ENCODE measurements at regions of chr10 and their contacts with region 1.

Region 1: GRCh38 chr10:103396064-103396788 is at the starts of genes ATP5MK and PDCD11:
- DNase-seq: peak; percentile 75 to 93 (median 91)
- ATAC-seq: peak; percentile 100
- H3K4me3 ChIP-seq: peak within 1 kb of the TSS; percentile 91
- H3K4me3 Mint-ChIP-seq: peak within 1 kb of the TSS; percentile 91 to 99 (median 99)
- H3K27ac ChIP-seq: peak within 1 kb of the TSS; percentile 87
- H3K27ac Mint-ChIP-seq: peak within 1 kb of the TSS; percentile 89 to 97 (median 96)
- H3K4me1 ChIP-seq: peaks cover 25 to 33% of the 10 kb centered on the region in 2 donors
- H3K4me1 Mint-ChIP-seq: peaks cover 42 to 68% (median 62%) of the 10 kb centered on the region in 7 donors
- H3K27me3 ChIP-seq: no peaks in the 10 kb centered on the region
- H3K27me3 Mint-ChIP-seq: no peaks in the 10 kb centered on the region
- total RNA-seq, gene ATP5MK: 106 to 334 (median 120) TPM
- total RNA-seq, gene PDCD11: 28.8 to 56.3 (median 38.8) TPM

Region 2: DNA sequence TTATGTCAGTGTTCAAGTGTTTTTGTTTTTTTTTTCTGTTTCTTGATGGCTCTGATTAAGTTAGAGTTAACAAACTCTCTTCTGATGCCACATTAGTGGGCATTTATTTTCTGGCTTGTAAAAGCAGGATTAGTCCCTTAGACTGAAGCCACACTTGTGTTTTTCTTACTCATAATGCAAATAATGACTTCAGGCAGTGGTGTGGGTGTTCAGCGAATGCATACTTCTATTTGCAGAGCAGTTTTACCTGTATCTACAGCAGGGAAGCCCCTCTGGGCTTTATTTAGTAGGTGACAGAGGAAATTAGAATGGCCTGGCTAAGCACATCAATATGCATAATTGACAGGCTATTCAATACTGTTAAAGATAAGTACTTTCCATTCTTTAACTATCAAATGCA is 398.2 kb before region 1 on chr10:
- CTCF ChIA-PET with region 1: no interaction called
- POLR2A ChIA-PET with region 1: no interaction called
- intact Hi-C with region 1: no loop called
- DNase-seq: no peak
- ATAC-seq: no peak
- H3K4me3 ChIP-seq: no peak overlapping the region
- H3K4me3 Mint-ChIP-seq: no peak overlapping the region
- H3K27ac ChIP-seq: no peak overlapping the region
- H3K27ac Mint-ChIP-seq: peak overlapping the region in 1 of 9 donors; percentile 11
- H3K4me1 ChIP-seq: peaks cover 6 to 9% of the 10 kb centered on the region in 2 donors
- H3K4me1 Mint-ChIP-seq: peaks cover 7 to 31% (median 24%) of the 10 kb centered on the region in 7 donors
- H3K27me3 ChIP-seq: no peaks in the 10 kb centered on the region
- H3K27me3 Mint-ChIP-seq: no peaks in the 10 kb centered on the region

Region 3: DNA sequence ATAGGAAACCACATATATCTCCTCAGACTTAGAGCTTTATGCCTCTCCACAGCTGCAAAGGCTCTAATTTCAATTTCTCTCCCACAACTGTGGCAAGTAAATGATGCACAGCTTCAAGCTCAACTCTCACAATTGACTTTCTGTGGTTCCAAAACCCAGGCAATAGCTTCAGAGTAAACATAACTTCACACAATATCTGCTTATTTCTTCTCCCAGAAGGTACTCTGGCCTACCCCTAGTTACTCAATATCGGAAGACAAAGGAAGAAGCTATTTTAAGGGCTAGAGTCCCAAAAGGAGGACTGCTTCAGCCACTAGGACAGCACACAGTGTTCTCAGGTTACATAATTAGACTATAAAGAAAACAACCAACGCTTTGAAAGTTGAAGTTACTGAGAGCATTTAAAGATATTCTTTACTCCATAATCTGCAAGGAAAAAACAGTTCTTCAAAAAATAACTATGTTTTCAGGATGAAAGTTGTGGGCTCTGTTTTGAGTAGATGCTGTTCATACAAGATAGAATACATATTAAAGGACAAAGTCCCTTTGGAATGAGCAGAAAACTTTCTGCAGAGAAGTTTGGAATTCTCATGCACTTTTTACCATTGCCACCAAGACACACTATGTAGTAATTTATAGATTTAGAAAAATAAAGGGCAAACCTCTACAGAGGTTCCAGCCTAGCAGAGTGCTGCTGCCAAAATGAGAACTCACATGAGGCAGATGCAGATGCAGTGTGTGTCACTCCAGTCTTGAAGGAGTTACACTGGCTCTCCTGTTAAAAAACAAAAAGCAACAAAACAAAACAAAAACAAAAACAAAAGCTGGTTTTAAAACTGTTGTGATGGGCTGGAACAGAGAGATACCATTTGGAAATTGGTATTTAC is 285.0 kb before region 1 on chr10:
- CTCF ChIA-PET with region 1: no interaction called
- POLR2A ChIA-PET with region 1: no interaction called
- intact Hi-C with region 1: no loop called
- DNase-seq: no peak
- ATAC-seq: no peak
- H3K4me3 ChIP-seq: no peak overlapping the region
- H3K4me3 Mint-ChIP-seq: no peak overlapping the region
- H3K27ac ChIP-seq: no peak overlapping the region
- H3K27ac Mint-ChIP-seq: peak overlapping the region in 3 of 9 donors; percentile 10 to 61 (median 60)
- H3K4me1 ChIP-seq: no peaks in the 10 kb centered on the region
- H3K4me1 Mint-ChIP-seq: peaks cover 0 to 12% (median 8%) of the 10 kb centered on the region in 7 donors
- H3K27me3 ChIP-seq: no peaks in the 10 kb centered on the region
- H3K27me3 Mint-ChIP-seq: no peaks in the 10 kb centered on the region

Region 4: DNA sequence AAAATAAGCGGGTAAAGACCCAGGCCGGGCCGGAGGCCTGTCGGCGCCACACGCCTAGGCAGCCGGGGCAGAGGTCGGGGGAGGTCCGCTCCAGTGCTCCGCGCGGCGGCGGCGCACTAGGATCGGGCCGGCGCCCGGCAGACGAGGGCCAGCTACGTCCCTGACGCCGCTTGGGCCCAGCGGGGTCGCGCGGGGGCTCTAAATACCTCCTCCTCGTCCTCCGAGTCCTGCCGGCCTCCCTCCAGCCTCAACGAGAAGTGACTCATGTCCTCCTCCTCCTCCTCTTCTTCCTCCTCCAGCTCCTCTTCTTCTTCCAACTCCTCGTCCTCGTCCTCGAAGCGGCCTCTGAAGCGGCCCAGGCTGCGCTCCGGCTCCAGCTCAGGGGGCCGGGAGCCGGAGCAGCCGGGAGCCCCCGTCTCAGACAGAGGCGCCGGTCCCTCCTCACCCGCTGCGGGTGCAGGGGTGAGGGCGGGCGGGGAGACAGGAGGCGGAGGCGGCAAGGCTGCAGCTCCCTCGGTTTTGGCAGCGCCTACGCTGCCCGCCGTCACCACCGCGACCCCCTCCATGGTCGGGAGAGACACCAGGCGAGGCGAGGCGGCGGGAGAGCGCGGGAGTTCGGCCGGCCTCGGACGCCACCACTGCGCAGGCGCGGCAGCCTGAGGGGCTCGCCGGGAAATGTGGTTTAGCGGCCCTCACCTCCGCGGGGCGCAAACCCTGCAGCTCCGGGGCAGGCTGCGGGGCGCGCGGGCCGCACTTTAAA is 45.5 kb before region 1 on chr10 and contains the start of gene PCGF6:
- CTCF ChIA-PET with region 1: no interaction called
- POLR2A ChIA-PET with region 1: interaction called, 3 read pairs
- intact Hi-C with region 1: loop called (anchors 1 kb)
- DNase-seq: peak; percentile 42 to 85 (median 70)
- ATAC-seq: peak; percentile 88
- H3K4me3 ChIP-seq: peak within 1 kb of the TSS; percentile 79
- H3K4me3 Mint-ChIP-seq: peak within 1 kb of the TSS; percentile 83 to 95 (median 91)
- H3K27ac ChIP-seq: peak within 1 kb of the TSS; percentile 80
- H3K27ac Mint-ChIP-seq: peak within 1 kb of the TSS; percentile 69 to 94 (median 86)
- H3K4me1 ChIP-seq: peaks cover 6 to 11% of the 10 kb centered on the region in 2 donors
- H3K4me1 Mint-ChIP-seq: peaks cover 0 to 14% (median 9%) of the 10 kb centered on the region in 7 donors
- H3K27me3 ChIP-seq: no peaks in the 10 kb centered on the region
- H3K27me3 Mint-ChIP-seq: no peaks in the 10 kb centered on the region
- total RNA-seq, gene PCGF6: 4.3 to 12.0 (median 6.6) TPM

Measured in naive thymus-derived CD4-positive, alpha-beta T cell (primary cell).